Activated T-helper 1 cell treated with anti-CD3 and anti-CD28 coated beads, Interleukin-12 subunit alpha, Interleukin-12 subunit beta, Interleukin-2, Interleukin-4 antibody, amounts not matched to agents 30 ng/mL and 10 ng/mL and 1 ng/mL, durations not matched to agents 14 hours and 24 hours and 36 hours (primary cell): ENCODE measurements at regions of chr12 and their contacts with region 1.

Region 1: GRCh38 chr12:110762891-110763290 is 20.2 kb upstream of the PPP1CC start:
- DNase-seq: no peak
- H3K4me3 Mint-ChIP-seq: peak overlapping the region; percentile 69
- H3K27ac Mint-ChIP-seq: peak overlapping the region; percentile 90
- H3K4me1 Mint-ChIP-seq: peaks cover 27% of the 10 kb centered on the region
- H3K27me3 Mint-ChIP-seq: peaks cover 5% of the 10 kb centered on the region

Region 2: DNA sequence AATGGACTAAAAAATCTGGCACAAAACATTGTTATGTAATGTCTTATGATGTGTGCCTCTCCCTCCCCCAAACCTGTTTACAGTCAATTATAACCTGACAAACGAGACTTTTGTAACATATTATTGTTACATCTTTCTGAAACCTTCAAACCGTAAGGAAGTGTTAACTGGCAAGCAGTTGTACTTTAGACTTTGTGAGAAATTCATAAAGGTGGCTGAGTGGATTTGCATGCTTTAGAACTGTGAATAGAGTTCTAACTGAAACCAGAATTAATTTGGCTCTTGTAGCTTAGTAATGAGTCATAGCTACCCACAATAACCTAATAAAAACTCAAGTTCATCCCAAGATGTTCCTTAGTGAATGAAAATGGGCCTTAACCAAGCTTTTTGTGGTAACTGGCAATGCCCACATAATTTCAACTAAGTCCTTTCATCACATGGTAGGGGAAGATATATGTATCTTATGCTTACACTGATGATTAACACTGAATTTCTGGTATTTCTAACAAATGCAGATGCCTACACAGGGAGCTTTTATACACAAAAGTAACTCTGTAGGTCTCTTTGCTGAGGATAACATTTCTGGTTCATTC is 231.1 kb before region 1 on chr12:
- intact Hi-C with region 1: no loop called
- DNase-seq: no peak
- H3K4me3 Mint-ChIP-seq: no peak overlapping the region
- H3K27ac Mint-ChIP-seq: peak overlapping the region; percentile 51
- H3K4me1 Mint-ChIP-seq: peaks cover 30% of the 10 kb centered on the region
- H3K27me3 Mint-ChIP-seq: no peaks in the 10 kb centered on the region

Region 3: DNA sequence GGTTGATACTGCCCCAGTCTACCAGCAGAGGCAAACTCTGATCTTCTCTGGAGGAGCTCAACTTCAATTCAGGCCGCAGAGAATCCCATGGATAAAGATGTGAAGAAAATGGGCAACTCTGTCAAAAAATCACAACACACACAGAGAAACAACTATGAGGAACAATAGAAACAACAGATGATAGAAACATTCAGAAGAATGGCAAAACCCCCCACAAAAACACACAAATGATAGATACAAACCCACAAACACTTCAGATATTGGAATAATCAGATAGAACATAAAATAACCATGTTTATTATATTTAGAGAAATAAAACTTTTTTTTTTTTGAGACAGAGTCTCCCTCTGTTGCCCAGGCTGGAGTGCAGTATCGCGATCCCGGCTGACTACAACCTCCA is 54.0 kb before region 1 on chr12:
- intact Hi-C with region 1: no loop called
- DNase-seq: no peak
- H3K4me3 Mint-ChIP-seq: no peak overlapping the region
- H3K27ac Mint-ChIP-seq: no peak overlapping the region
- H3K4me1 Mint-ChIP-seq: no peaks in the 10 kb centered on the region
- H3K27me3 Mint-ChIP-seq: no peaks in the 10 kb centered on the region

Region 4: DNA sequence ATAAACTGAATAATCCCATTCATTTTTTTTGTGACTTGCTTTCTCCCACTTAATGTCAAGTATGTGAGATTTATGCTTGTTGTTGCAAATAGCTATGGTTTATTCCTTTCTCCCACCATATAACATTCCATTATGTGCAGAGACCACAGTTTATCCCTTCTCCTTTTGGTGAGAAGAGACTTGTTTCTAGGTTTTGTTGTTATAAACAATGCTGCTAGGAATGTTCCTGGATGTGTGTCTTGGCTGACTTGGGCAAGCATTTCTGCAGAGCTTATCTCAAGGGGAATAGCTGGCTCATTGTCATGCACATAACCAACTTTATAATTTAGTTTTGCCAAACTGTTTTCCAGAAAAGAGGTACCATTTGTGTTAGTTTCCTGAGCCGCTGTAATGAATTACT is 27.4 kb after region 1 on chr12:
- intact Hi-C with region 1: loop called (anchors 2 kb)
- DNase-seq: no peak
- H3K4me3 Mint-ChIP-seq: no peak overlapping the region
- H3K27ac Mint-ChIP-seq: no peak overlapping the region
- H3K4me1 Mint-ChIP-seq: peaks cover 22% of the 10 kb centered on the region
- H3K27me3 Mint-ChIP-seq: no peaks in the 10 kb centered on the region